BJ (cell line): ENCODE measurements at regions of chr17 and their contacts with region 1.

Region 1: DNA sequence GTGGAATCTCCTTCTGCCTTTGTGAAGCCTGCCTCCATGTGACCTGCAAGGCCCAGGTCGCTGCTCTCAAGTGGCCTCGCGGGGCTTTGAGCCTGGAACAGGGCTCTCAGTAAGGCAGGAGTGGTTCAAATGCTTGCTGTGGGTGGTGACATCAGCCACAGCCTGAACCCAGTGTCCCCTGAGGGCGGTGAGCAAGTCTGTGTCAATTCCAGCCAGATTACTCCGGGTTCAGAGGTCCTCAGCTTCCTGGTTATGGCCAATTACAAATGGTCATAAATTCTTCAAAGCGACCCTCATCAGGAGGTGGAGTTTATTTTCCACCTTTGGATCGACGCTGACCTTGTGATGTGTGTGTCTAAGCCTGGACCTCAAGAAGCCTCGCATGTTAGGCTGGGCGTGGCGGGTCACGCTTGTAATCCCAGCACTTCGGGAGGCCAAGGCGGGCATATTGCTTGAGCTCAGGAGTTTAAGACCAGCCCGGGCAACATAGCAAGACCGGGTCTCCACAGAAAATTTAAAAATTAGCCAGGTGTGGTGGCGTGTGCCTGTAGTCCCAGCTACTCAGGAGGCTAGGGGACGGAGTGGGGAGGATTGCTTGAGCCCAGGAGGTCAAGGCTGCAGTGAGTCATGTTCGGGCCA is 17.3 kb downstream of the LGALS3BP start:
- DNase-seq: no peak
- H3K4me3 ChIP-seq: no peak overlapping the region
- H3K27me3 ChIP-seq: no peaks in the 10 kb centered on the region
- CTCF ChIP-seq: no peak

Region 2: GRCh38 chr17:78598013-78598471 is 364.4 kb before region 1 on chr17:
- CTCF ChIA-PET with region 1: no interaction called
- POLR2A ChIA-PET with region 1: interaction called, 11 read pairs
- DNase-seq: peak; percentile 57
- H3K4me3 ChIP-seq: no peak overlapping the region
- H3K27me3 ChIP-seq: no peaks in the 10 kb centered on the region; the same call in none of the 2 replicates
- CTCF ChIP-seq: no peak

Region 3: DNA sequence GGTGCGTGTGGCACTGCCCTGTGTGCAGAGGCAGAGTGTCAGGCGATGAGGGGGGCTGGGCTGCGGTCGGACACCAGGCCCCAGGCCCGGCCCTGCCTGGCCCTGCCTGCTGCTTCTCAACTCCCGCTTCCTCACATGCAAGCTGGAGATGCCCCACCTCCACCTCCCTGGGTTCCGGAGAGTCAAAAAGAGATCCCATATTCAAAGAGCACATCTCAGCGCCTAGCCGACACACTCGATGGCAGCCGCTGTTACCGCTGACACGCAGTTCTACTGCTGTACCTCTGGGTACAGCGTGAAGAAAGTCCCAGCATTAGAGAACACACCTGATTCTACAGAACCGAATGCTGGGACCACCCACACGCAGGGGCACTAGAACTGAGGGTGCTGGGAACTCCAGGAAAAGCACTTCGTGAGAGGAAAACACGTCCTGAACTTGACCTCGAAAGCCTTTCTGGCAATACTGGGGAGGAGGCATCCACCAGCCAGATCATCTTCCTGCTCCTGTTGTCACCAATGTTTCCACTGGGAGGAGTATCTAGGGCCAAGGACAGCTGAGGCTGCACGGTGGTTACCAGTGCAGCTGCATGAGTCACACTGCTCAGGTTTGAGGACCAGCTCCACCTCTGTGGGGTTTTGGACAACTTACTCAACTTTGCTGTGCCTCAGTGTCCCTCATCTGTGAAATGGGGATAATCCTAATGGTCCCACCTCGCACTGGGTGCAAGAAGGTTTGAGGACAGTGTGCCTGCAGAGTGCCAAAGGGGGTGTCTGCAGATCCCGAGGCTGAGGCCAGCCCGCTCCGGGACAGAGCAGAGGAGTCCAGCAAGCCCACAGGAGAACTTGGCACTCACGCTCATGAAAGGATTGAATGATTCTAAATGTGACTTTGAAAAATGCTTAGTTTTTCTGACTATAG is 284.9 kb before region 1 on chr17:
- CTCF ChIA-PET with region 1: no interaction called
- POLR2A ChIA-PET with region 1: no interaction called
- DNase-seq: no peak
- H3K4me3 ChIP-seq: no peak overlapping the region
- H3K27me3 ChIP-seq: no peaks in the 10 kb centered on the region
- CTCF ChIP-seq: no peak

Region 4: GRCh38 chr17:78979780-78980623 is 17.5 kb after region 1 on chr17 and contains the start of gene LGALS3BP:
- CTCF ChIA-PET with region 1: no interaction called
- POLR2A ChIA-PET with region 1: no interaction called
- DNase-seq: no peak
- H3K4me3 ChIP-seq: 0 out of 2 replicates have a peak within 1 kb of the TSS, but pooled peaks have one; percentile 9
- H3K27me3 ChIP-seq: no peaks in the 10 kb centered on the region
- CTCF ChIP-seq: no peak
- polyA plus RNA-seq, gene LGALS3BP: 39.0 and 102 TPM in 2 replicates